Esophagus squamous epithelium (tissue), 5 donors: ENCODE measurements at regions of chr16 and their contacts with region 1.

Region 1: DNA sequence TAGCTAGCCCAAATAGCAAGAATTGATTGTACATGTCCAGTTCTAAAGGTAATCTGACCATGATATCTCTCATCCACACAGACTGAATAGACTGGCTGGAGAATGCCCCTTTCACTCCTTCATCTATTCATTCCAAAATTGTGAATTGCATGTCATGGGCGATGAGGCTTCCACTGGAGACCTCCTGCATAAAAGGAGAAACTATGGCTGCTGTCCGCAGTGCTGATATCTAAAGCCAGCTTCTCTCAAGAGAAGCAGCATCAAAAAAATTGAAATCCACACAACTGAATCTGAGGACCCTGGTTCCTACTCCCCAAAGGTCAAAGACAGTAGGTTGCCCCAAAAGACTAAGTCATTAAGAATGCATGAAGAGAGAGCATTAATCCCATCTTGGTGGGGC is 7.9 kb upstream of the SCNN1G start:
- DNase-seq: no peak
- H3K4me3 ChIP-seq: no peak overlapping the region
- H3K27ac ChIP-seq: no peak overlapping the region
- H3K4me1 ChIP-seq: no peaks in the 10 kb centered on the region
- H3K27me3 ChIP-seq: peaks cover 0 to 25% (median 0%) of the 10 kb centered on the region in 4 donors
- CTCF ChIP-seq: no peak
- POLR2A ChIP-seq: no peak

Region 2: GRCh38 chr16:23026784-23027362 is 147.7 kb before region 1 on chr16:
- intact Hi-C with region 1: no loop called
- DNase-seq: no peak
- H3K4me3 ChIP-seq: no peak overlapping the region
- H3K27ac ChIP-seq: no peak overlapping the region
- H3K4me1 ChIP-seq: no peaks in the 10 kb centered on the region
- H3K27me3 ChIP-seq: peaks cover 0 to 33% (median 0%) of the 10 kb centered on the region in 4 donors
- CTCF ChIP-seq: no peak
- POLR2A ChIP-seq: no peak

Region 3: GRCh38 chr16:23060458-23061320 is 113.9 kb before region 1 on chr16:
- intact Hi-C with region 1: loop called (anchors 10 kb)
- DNase-seq: no peak
- H3K4me3 ChIP-seq: no peak overlapping the region
- H3K27ac ChIP-seq: no peak overlapping the region
- H3K4me1 ChIP-seq: peaks cover 0 to 9% (median 0%) of the 10 kb centered on the region in 3 donors
- H3K27me3 ChIP-seq: no peaks in the 10 kb centered on the region
- CTCF ChIP-seq: peak; percentile 20 to 72 (median 70)
- POLR2A ChIP-seq: no peak